ENCODE measurements at regions of chr1 and their contacts with region 1.

Region 1: GRCh38 chr1:145985502-145986439 is 10.6 kb downstream of the TXNIP start:
- DNase-seq: no peak
- H3K4me3 ChIP-seq: peak overlapping the region in 1 of 2 donors; percentile 15
- H3K4me3 Mint-ChIP-seq: peak overlapping the region; percentile 52 to 92 (median 76)
- H3K27ac ChIP-seq: no peak overlapping the region
- H3K27ac Mint-ChIP-seq: peak overlapping the region in 6 of 7 donors; percentile 88 to 94 (median 92)
- H3K4me1 ChIP-seq: peaks cover 85% of the 10 kb centered on the region
- H3K4me1 Mint-ChIP-seq: peaks cover 25 to 67% (median 43%) of the 10 kb centered on the region in 4 donors
- H3K27me3 ChIP-seq: no peaks in the 10 kb centered on the region
- H3K27me3 Mint-ChIP-seq: no peaks in the 10 kb centered on the region

Region 2: DNA sequence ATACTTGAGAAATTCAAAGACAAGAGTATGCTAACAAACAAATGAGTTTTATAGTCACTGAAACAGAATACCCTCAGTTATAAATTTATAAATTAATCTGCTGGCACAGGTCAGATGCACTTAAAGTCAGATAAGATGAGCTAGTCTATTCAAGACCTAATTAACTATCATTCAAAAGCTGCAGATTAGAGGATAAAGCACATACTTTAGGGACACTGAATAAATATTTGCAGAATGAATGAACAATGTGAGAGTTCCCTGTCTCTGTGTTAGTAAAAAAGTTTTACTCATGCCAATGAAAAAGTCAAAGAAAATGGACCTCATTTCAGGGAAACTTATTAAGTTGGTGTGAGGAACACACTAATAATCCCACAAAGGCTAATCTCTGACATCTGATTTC is 220.2 kb before region 1 on chr1:
- CTCF ChIA-PET with region 1: no interaction called
- POLR2A ChIA-PET with region 1: no interaction called
- intact Hi-C with region 1: no loop called
- DNase-seq: no peak
- H3K4me3 ChIP-seq: no peak overlapping the region
- H3K4me3 Mint-ChIP-seq: no peak overlapping the region
- H3K27ac ChIP-seq: no peak overlapping the region
- H3K27ac Mint-ChIP-seq: no peak overlapping the region
- H3K4me1 ChIP-seq: no peaks in the 10 kb centered on the region
- H3K4me1 Mint-ChIP-seq: peaks cover 0 to 3% (median 0%) of the 10 kb centered on the region in 4 donors
- H3K27me3 ChIP-seq: no peaks in the 10 kb centered on the region
- H3K27me3 Mint-ChIP-seq: no peaks in the 10 kb centered on the region

Region 3: GRCh38 chr1:145942405-145942804 is 43.4 kb before region 1 on chr1:
- CTCF ChIA-PET with region 1: no interaction called
- POLR2A ChIA-PET with region 1: no interaction called
- intact Hi-C with region 1: no loop called
- DNase-seq: no peak
- H3K4me3 ChIP-seq: no peak overlapping the region
- H3K4me3 Mint-ChIP-seq: no peak overlapping the region
- H3K27ac ChIP-seq: no peak overlapping the region
- H3K27ac Mint-ChIP-seq: peak overlapping the region in 3 of 7 donors; percentile 25 to 45 (median 42)
- H3K4me1 ChIP-seq: no peaks in the 10 kb centered on the region
- H3K4me1 Mint-ChIP-seq: peaks cover 6 to 17% (median 8%) of the 10 kb centered on the region in 4 donors
- H3K27me3 ChIP-seq: no peaks in the 10 kb centered on the region
- H3K27me3 Mint-ChIP-seq: no peaks in the 10 kb centered on the region

Region 4: DNA sequence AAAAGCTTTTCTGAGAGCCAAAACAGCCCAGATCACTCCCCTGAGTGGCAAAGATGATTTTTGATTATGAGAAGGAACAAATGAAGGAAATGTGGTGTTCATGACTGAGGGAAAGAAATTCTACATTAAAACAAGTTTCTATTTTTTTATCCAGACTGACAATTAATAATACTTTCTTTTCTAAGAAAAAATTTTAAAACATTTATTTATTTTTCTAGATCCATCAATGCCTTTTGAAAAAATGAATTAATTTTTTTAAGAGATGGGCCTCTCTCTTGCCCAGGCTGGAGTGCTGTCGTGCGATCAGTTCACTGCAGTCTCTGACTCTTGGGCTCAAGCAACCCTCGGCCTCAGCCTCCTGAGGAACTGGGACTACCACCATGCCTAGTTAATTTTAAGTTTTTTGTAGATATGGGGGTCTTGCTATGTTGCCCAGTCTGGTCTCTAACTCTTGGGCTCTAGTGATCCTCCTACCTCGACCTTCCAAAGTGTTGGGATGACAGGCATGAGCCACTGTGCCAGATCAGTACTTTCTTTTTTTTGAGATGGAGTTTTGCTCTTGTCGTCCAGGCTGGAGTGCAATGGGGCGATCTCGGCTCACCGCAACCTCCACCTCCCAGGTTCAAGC is 21.8 kb after region 1 on chr1:
- CTCF ChIA-PET with region 1: interaction called, 447 read pairs
- POLR2A ChIA-PET with region 1: interaction called, 1,967 read pairs
- intact Hi-C with region 1: no loop called
- DNase-seq: no peak
- H3K4me3 ChIP-seq: no peak overlapping the region
- H3K4me3 Mint-ChIP-seq: peak overlapping the region in 6 of 8 donors; percentile 79 to 87 (median 84)
- H3K27ac ChIP-seq: no peak overlapping the region
- H3K27ac Mint-ChIP-seq: peak overlapping the region; percentile 45 to 95 (median 88)
- H3K4me1 ChIP-seq: peaks cover 47% of the 10 kb centered on the region
- H3K4me1 Mint-ChIP-seq: peaks cover 24 to 54% (median 33%) of the 10 kb centered on the region in 4 donors
- H3K27me3 ChIP-seq: no peaks in the 10 kb centered on the region
- H3K27me3 Mint-ChIP-seq: no peaks in the 10 kb centered on the region

Region 5: GRCh38 chr1:147062956-147063355 is 1077.2 kb after region 1 on chr1:
- CTCF ChIA-PET with region 1: no interaction called
- POLR2A ChIA-PET with region 1: no interaction called
- intact Hi-C with region 1: no loop called
- DNase-seq: no peak
- H3K4me3 ChIP-seq: no peak overlapping the region
- H3K4me3 Mint-ChIP-seq: no peak overlapping the region
- H3K27ac ChIP-seq: no peak overlapping the region
- H3K27ac Mint-ChIP-seq: no peak overlapping the region
- H3K4me1 ChIP-seq: no peaks in the 10 kb centered on the region
- H3K4me1 Mint-ChIP-seq: no peaks in the 10 kb centered on the region
- H3K27me3 ChIP-seq: no peaks in the 10 kb centered on the region
- H3K27me3 Mint-ChIP-seq: peaks cover 2 to 8% of the 10 kb centered on the region in 2 donors

Measured in CD4-positive, alpha-beta memory T cell (primary cell).